K562 (cell line): ENCODE measurements at regions of chr19 and their contacts with region 1.

Region 1: GRCh38 chr19:48720613-48721296 is 1.2 kb upstream of the MAMSTR start:
- DNase-seq: peak; percentile 89 to 98 (median 93)
- ATAC-seq: peak; percentile 94
- H3K4me3 ChIP-seq: peak overlapping the region; percentile 54
- H3K27ac ChIP-seq: peak overlapping the region; percentile 75
- H3K4me1 ChIP-seq: peaks cover 14 to 54% of the 10 kb centered on the region in 2 experiments
- H3K27me3 ChIP-seq: no peaks in the 10 kb centered on the region
- CTCF ChIP-seq: 0 out of 6 replicates have a peak, but pooled peaks of 1 of the 3 experiments have one; percentile 10
- EP300 ChIP-seq: no peak
- POLR2A ChIP-seq: peak; percentile 61
- RAD21 ChIP-seq: no peak

Region 2: GRCh38 chr19:48630296-48631063 is 90.3 kb before region 1 on chr19:
- CTCF ChIA-PET with region 1: no interaction called
- POLR2A ChIA-PET with region 1: no interaction called
- in situ Hi-C with region 1: no loop called
- intact Hi-C with region 1: no loop called
- DNase-seq: no peak
- ATAC-seq: no peak
- H3K4me3 ChIP-seq: no peak overlapping the region
- H3K27ac ChIP-seq: no peak overlapping the region
- H3K4me1 ChIP-seq: peaks cover 27 to 79% of the 10 kb centered on the region in 2 experiments
- H3K27me3 ChIP-seq: no peaks in the 10 kb centered on the region
- CTCF ChIP-seq: no peak
- EP300 ChIP-seq: no peak
- POLR2A ChIP-seq: no peak; the same call in 1 of the 2 replicates
- RAD21 ChIP-seq: no peak

Region 3: GRCh38 chr19:48738557-48739399 is 18.0 kb after region 1 on chr19:
- CTCF ChIA-PET with region 1: no interaction called
- POLR2A ChIA-PET with region 1: interaction called, 10 read pairs
- in situ Hi-C with region 1: no loop called
- intact Hi-C with region 1: no loop called
- DNase-seq: peak; percentile 97 to 99 (median 98)
- ATAC-seq: peak; percentile 86
- H3K4me3 ChIP-seq: peak overlapping the region; percentile 53
- H3K27ac ChIP-seq: peak overlapping the region; percentile 83
- H3K4me1 ChIP-seq: peaks cover 43 to 56% of the 10 kb centered on the region in 2 experiments
- H3K27me3 ChIP-seq: no peaks in the 10 kb centered on the region
- CTCF ChIP-seq: peak in 2 of 3 experiments; percentile 88 to 98; a peak in 5 of 6 replicates
- EP300 ChIP-seq: peak; percentile 29; the same call in 1 of the 2 replicates
- POLR2A ChIP-seq: peak; percentile 77
- RAD21 ChIP-seq: peak; percentile 81 to 91

Region 4: DNA sequence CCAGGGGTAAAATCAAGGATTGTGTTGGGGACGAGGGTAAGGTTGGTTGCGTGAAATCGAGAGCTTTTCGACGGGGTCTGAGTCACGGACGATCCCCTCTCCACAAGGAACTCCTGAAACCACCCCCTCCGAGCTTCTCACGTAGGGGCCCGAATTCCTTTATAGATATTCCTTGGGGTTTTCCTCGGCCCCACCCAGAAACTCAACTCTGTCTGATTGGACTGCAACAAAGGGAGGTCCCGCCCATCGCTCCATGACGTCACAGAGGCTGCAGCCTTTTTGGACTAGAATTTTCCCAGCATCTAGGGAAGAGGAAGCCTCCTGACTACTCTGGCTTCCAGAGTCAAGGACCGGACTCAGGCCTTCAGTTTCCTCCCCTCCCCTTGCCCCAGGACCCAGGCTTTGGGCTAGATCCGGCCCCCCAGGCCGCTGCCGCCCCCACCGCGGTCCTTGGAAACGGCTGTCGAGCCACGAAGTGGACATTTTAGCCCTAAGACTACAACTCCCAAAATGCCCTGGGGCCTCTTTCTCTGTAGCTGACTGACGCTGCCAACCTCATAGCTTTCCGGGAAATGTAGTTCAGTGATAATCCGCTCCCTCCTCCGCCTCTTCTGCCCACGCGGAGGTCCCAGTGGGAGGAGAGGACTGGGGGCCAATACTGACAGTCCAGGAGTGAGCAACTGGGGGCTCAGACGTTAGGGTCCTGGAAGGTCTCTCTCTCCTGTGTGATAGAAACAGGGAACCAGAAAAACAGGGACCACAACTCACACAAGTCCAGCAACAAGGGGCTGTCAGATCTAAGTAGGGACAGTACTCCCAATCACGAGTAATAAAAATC is 26.2 kb after region 1 on chr19 and contains the start of gene IZUMO1:
- CTCF ChIA-PET with region 1: no interaction called
- POLR2A ChIA-PET with region 1: interaction called, 10 read pairs
- in situ Hi-C with region 1: no loop called
- intact Hi-C with region 1: no loop called
- DNase-seq: peak; percentile 75 to 94 (median 82)
- ATAC-seq: peak; percentile 89
- H3K4me3 ChIP-seq: peak within 1 kb of the TSS; percentile 51
- H3K27ac ChIP-seq: peak within 1 kb of the TSS; percentile 76
- H3K4me1 ChIP-seq: peaks cover 30 to 45% of the 10 kb centered on the region in 2 experiments
- H3K27me3 ChIP-seq: no peaks in the 10 kb centered on the region
- CTCF ChIP-seq: no peak
- EP300 ChIP-seq: no peak
- POLR2A ChIP-seq: peak; percentile 58; the same call in 1 of the 2 replicates
- RAD21 ChIP-seq: no peak
- polyA plus RNA-seq, gene IZUMO1: 0.24 to 0.73 TPM